Activated CD8-positive, alpha-beta T cell treated with anti-CD3 and anti-CD28 coated beads, Interleukin-2, amount 10 ng/mL, durations not matched to agents 7 days and 5 days (primary cell): ENCODE measurements at regions of chr6 and their contacts with region 1.

Region 1: DNA sequence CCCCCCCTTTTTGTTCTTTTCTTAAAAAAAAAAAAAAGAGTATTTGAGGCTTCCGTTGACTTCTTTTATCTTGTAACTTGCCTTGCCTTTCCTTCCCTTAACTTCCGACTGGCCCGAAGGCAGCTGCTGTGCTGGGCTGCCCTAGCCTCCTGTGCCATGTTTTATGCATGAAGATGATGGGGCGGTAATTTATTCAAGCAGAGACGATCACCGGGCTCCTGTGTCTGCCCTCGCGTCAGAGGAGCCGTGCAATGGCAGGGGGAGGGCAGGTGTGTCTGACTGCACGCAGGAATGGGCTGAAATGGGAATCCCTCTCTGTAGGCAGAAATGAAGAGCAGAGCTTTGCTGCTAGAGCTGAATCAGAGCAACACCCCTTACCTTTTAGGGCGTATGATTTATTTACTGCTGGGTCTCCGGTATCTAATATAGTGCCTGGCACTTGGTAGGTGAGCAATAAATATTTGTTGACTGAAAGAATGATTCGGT is 106.3 kb upstream of the RIPOR2 start:
- DNase-seq: peak; percentile 62
- ATAC-seq: peak; percentile 72
- H3K4me3 Mint-ChIP-seq: peak overlapping the region; percentile 92
- H3K27ac Mint-ChIP-seq: peak overlapping the region; percentile 94
- H3K4me1 Mint-ChIP-seq: peaks cover 60% of the 10 kb centered on the region
- H3K27me3 Mint-ChIP-seq: peaks cover 5% of the 10 kb centered on the region

Region 2: GRCh38 chr6:25053875-25054371 is 11.8 kb after region 1 on chr6:
- CTCF ChIA-PET with region 1: interaction called, 39 read pairs
- POLR2A ChIA-PET with region 1: interaction called, 13 read pairs
- DNase-seq: no peak
- ATAC-seq: no peak
- H3K4me3 Mint-ChIP-seq: no peak overlapping the region
- H3K27ac Mint-ChIP-seq: peak overlapping the region; percentile 44
- H3K4me1 Mint-ChIP-seq: peaks cover 89% of the 10 kb centered on the region
- H3K27me3 Mint-ChIP-seq: no peaks in the 10 kb centered on the region

Region 3: GRCh38 chr6:25061289-25061936 is 19.3 kb after region 1 on chr6:
- CTCF ChIA-PET with region 1: interaction called, 16 read pairs
- POLR2A ChIA-PET with region 1: interaction called, 9 read pairs
- DNase-seq: no peak
- ATAC-seq: no peak
- H3K4me3 Mint-ChIP-seq: no peak overlapping the region
- H3K27ac Mint-ChIP-seq: peak overlapping the region; percentile 9
- H3K4me1 Mint-ChIP-seq: peaks cover 41% of the 10 kb centered on the region
- H3K27me3 Mint-ChIP-seq: no peaks in the 10 kb centered on the region